Gastrocnemius medialis (tissue), 4 donors: ENCODE measurements at regions of chr1 and their contacts with region 1.

Region 1: GRCh38 chr1:64038965-64039926 is 164.2 kb upstream of the UBE2U start:
- DNase-seq: peak; percentile 92 to 94
- ATAC-seq: peak; percentile 93 to 94
- H3K4me3 ChIP-seq: no peak overlapping the region
- H3K27ac ChIP-seq: peak overlapping the region; percentile 83 to 95 (median 84)
- H3K4me1 ChIP-seq: peaks cover 51 to 57% of the 10 kb centered on the region in 2 donors
- H3K27me3 ChIP-seq: no peaks in the 10 kb centered on the region
- CTCF ChIP-seq: no peak
- POLR2A ChIP-seq: peak in 1 of 2 donors; percentile 65

Region 2: GRCh38 chr1:63928186-63929105 is 110.8 kb before region 1 on chr1:
- in situ Hi-C with region 1: no loop called
- intact Hi-C with region 1: loop called (anchors 2 kb)
- DNase-seq: peak; percentile 63 to 78
- ATAC-seq: peak; percentile 95
- H3K4me3 ChIP-seq: no peak overlapping the region
- H3K27ac ChIP-seq: peak overlapping the region; percentile 82 to 90 (median 87)
- H3K4me1 ChIP-seq: peaks cover 19 to 26% of the 10 kb centered on the region in 2 donors
- H3K27me3 ChIP-seq: no peaks in the 10 kb centered on the region
- CTCF ChIP-seq: no peak
- POLR2A ChIP-seq: no peak

Region 3: GRCh38 chr1:63940440-63940839 is 98.8 kb before region 1 on chr1:
- in situ Hi-C with region 1: no loop called
- intact Hi-C with region 1: no loop called
- DNase-seq: no peak
- ATAC-seq: no peak
- H3K4me3 ChIP-seq: no peak overlapping the region
- H3K27ac ChIP-seq: no peak overlapping the region
- H3K4me1 ChIP-seq: peaks cover 6 to 13% of the 10 kb centered on the region in 2 donors
- H3K27me3 ChIP-seq: no peaks in the 10 kb centered on the region
- CTCF ChIP-seq: no peak
- POLR2A ChIP-seq: no peak